ENCODE measurements at regions of chr16 and their contacts with region 1.

Region 1: DNA sequence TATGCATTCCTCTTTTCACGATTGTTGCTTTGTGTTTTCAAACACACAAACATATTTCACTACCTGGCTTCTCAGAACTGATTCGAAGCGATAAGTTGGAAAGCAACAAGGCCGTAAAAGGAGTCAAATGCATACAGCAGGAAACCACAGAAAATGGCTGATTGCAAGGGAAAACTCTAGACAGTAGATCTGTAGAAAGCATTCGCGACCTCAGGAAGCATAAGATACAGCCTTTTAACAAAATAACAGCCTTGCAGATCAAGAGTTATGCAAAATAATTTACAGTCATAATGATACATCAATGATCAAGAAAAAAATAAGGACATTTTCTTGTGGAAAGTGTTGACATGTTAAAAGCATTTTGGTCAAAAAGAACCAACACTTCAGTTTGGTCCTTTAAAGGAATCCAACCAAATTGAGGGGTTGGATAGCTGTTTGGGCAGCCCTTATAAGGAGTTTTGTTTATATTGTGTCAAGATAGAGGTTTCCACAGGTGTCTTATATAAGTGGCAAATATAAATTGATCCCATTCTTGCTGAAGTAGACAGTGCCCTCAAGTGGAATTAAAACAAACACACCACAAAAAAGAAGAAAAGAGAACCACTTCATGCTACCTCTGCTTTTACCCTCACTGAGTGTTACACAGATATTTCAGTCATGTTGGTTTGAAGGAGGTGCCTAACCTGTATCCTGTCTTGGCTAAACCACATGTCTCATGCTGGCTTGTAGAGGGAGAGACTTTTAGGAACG is 5.5 kb downstream of the CYLD start:
- DNase-seq: no peak
- H3K4me3 Mint-ChIP-seq: no peak overlapping the region
- H3K27ac Mint-ChIP-seq: no peak overlapping the region
- H3K4me1 Mint-ChIP-seq: peaks cover 14% of the 10 kb centered on the region
- H3K27me3 Mint-ChIP-seq: no peaks in the 10 kb centered on the region
- CTCF ChIP-seq: peak; percentile 29

Region 2: DNA sequence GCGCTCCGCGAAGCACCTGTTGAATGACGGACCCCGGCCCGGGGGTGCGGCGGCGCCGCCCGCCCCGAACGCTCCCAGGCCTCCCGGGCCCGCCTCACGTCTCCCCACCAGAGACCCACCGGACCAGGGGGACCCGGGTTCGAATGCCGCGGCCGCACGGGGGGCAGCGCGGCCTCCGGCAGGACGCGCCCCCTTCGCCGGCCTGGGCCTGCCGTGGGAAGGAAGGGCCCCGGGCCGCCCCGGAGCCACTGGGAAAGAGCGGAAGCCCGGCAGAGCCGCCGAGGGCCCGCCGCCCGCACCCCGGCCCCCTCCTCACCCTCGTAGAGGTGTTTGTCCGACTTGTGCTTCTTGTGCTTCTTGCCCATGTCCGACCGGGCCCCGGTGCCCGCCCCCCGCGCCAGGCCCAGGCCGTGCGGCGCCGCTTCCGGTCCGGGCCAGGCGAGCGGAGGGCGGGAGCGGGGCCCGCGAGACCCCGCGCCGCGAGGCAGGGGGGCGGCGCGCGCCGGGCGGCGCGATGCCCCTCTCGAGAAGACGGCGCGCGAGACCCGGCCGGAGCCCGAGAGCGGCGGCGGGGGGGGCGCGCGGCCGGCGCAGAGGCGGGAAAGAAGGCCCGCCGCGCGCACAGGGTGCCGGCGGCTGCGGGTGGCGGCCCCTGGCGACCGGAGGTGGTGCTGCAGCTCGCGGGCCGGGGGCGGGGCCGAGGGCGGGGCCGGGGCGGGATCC is 378.8 kb before region 1 on chr16 and contains the start of gene BRD7:
- CTCF ChIA-PET with region 1: no interaction called
- intact Hi-C with region 1: loop called (anchors 5 kb)
- DNase-seq: peak; percentile 77
- H3K4me3 Mint-ChIP-seq: peak within 1 kb of the TSS; percentile 74
- H3K27ac Mint-ChIP-seq: peak within 1 kb of the TSS; percentile 57
- H3K4me1 Mint-ChIP-seq: peaks cover 14% of the 10 kb centered on the region
- H3K27me3 Mint-ChIP-seq: peaks cover 23% of the 10 kb centered on the region
- CTCF ChIP-seq: peak; percentile 61
- total RNA-seq, gene BRD7: 96.0 and 98.7 TPM in 2 replicates

Region 3: DNA sequence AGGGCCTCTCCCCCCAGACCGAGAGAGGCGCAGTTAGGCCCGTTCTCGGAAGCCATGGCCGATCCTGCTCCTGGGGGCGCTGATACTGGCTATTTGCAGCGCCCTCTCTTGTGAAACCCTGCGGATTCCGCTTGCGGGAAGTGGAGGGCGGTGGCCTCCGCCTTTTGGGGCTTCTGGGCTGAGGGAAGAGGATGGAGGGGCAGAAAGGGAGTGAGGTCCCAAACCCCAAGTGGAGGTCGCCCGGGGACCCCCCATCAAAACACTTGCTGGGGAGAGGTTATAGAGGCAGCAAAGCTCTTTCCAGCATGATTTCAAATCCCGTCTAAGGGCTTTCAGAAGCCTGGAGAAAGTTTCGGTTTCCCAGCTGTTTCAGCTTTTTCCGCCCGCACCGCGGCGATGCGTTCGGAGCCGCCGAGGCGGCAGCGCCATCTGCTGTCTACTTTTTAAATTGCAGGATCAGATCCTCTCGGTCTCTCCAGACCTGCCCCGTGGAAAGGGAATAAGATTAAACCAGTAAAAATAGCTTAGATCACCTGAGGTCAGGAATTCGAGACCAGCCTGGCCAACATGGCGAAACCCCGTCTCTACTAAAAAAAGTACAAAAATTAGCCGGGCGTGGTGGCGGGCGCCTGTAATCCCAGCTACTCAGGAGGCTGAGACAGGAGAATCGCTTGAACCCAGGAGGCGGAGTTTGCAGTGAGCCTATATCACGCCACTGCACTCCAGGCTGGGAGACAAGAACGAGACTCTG is 82.1 kb before region 1 on chr16:
- CTCF ChIA-PET with region 1: interaction called, 4 read pairs
- intact Hi-C with region 1: loop called (anchors 1 kb)
- DNase-seq: peak; percentile 92
- H3K4me3 Mint-ChIP-seq: peak overlapping the region; percentile 49
- H3K27ac Mint-ChIP-seq: peak overlapping the region; percentile 21
- H3K4me1 Mint-ChIP-seq: peaks cover 31% of the 10 kb centered on the region
- H3K27me3 Mint-ChIP-seq: no peaks in the 10 kb centered on the region
- CTCF ChIP-seq: peak; percentile 94

Region 4: DNA sequence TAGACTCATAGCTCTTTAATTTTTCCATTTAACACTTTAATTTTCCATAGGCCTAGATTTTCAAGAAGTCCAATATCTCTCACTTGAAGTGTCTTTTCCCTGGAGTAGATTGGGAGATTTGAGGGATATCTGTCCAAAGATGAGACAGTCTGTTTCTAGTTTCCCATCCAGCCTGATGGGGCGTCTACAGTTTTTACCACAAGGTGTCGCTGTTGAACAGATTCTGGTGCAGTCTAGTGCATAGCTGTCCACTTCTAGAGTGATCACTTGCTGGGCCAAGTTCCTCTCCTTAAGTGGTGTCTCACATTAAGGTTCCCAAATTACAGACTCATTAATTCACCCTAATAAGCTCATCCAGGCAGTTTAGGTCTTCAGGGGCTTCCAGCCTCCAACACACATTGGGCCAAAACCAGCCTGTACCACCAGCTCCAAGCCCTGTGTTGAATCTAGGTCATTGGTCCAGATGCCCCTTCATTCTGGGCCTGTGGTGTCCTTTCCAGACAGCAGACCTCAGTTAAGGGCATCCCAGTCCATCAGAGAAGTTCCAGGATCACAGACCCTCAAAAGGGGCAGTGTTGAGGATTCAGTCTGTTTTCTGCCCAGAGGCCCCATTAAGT is 75.6 kb before region 1 on chr16:
- CTCF ChIA-PET with region 1: interaction called, 4 read pairs
- intact Hi-C with region 1: loop called (anchors 1 kb)
- DNase-seq: peak; percentile 59
- H3K4me3 Mint-ChIP-seq: no peak overlapping the region
- H3K27ac Mint-ChIP-seq: no peak overlapping the region
- H3K4me1 Mint-ChIP-seq: peaks cover 38% of the 10 kb centered on the region
- H3K27me3 Mint-ChIP-seq: peaks cover 5% of the 10 kb centered on the region
- CTCF ChIP-seq: peak; percentile 71

Region 5: GRCh38 chr16:50683689-50684374 is 63.5 kb before region 1 on chr16:
- CTCF ChIA-PET with region 1: no interaction called
- intact Hi-C with region 1: no loop called
- DNase-seq: no peak
- H3K4me3 Mint-ChIP-seq: no peak overlapping the region
- H3K27ac Mint-ChIP-seq: no peak overlapping the region
- H3K4me1 Mint-ChIP-seq: no peaks in the 10 kb centered on the region
- H3K27me3 Mint-ChIP-seq: peaks cover 41% of the 10 kb centered on the region
- CTCF ChIP-seq: no peak

Region 6: GRCh38 chr16:50702725-50703124 is 44.7 kb before region 1 on chr16:
- CTCF ChIA-PET with region 1: no interaction called
- intact Hi-C with region 1: no loop called
- DNase-seq: no peak
- H3K4me3 Mint-ChIP-seq: no peak overlapping the region
- H3K27ac Mint-ChIP-seq: no peak overlapping the region
- H3K4me1 Mint-ChIP-seq: peaks cover 29% of the 10 kb centered on the region
- H3K27me3 Mint-ChIP-seq: no peaks in the 10 kb centered on the region
- CTCF ChIP-seq: no peak

Region 7: DNA sequence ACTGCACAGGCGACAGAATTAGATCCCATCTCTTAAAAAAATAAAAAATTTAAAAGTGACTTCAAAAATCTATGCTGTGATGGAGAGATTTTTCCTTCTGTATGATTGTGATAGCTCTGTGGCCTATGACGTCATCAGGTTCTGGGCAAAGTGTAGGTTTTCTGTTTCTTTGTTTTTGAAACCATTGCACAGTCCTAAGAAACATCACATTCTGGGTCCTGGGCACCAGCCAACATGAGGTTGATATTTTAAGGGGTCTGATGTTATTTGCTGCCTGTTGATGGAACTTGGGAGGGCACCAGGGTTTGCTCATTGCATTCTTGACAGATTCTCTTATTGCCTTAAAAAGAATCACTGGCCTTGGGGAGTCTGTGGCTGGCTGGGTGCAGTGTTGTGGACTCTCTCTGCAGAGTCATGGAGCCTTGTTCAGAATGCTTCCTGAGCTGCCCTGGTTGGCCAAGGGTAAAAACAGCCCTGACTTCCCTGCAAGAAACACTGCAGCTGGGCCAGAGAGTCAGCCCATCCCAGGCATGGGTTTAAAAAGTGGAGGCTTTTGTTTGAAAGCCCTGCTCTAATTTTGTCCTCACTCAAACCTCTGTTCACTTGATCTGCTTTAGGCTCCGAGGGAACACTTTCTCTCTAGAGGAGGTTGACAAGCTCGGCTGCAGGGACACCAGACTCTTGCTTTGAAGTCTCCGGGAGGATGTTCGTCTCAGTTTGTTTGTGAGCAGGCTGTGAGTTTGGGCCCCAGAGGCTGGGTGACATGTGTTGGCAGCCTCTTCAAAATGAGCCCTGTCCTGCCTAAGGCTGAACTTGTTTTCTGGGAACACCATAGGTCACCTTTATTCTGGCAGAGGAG is 16.0 kb before region 1 on chr16:
- CTCF ChIA-PET with region 1: no interaction called
- intact Hi-C with region 1: no loop called
- DNase-seq: no peak
- H3K4me3 Mint-ChIP-seq: no peak overlapping the region
- H3K27ac Mint-ChIP-seq: no peak overlapping the region
- H3K4me1 Mint-ChIP-seq: no peaks in the 10 kb centered on the region
- H3K27me3 Mint-ChIP-seq: peaks cover 27% of the 10 kb centered on the region
- CTCF ChIP-seq: no peak